ENCODE measurements at regions of chr1 and their contacts with region 1.

Region 1: DNA sequence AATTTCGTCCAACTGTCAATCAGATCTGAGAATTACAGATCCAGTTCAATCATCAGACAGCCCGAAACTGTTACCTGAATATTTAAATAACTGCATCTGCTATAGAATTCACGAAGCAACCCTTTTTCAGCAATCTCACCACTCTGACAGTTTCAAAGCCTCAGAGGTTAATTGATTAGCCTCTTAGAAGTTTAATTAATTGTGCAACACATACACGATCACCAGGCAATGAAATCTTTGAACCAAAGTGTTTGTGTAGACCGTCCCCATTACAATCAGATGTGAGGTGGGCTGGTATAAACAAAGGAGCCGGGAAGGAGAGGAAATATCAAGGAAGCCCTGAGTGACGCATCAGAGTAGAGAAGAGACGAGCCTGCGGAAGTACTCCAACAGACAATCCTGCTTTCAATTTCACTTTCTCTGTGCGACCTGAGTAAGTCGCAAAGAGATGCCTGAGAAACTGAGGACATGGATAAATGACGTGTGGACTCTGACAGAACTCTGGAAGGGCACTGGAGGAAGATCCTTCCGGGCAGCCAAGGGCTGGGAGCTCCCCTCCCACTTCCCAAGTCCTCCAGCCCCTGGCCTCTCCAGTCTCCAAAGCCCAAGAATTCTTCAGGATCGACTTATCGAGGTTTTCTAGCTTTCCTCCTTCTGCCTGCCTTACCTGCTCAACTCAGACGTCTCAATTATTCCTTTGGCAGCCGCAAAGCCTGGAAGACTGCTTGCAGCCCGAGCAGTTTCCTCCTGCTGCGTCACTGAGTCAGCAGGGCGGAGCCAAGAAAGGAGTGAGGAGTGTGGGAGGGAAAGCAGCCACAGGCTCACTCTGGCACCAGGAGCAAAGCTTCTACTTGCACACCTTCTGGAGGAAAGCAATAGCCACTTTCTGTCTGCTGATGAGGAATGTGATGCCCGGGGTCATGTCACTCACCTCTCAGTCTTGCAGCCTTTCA is at the start of gene RNASEL:
- DNase-seq: peak; percentile 94
- H3K4me3 ChIP-seq: peak within 1 kb of the TSS; percentile 71 to 73 (median 72)
- H3K27ac ChIP-seq: peak within 1 kb of the TSS; percentile 86 to 93 (median 90)
- H3K4me1 ChIP-seq: peaks cover 7 to 34% (median 28%) of the 10 kb centered on the region in 4 donors
- H3K27me3 ChIP-seq: no peaks in the 10 kb centered on the region
- CTCF ChIP-seq: no peak
- EP300 ChIP-seq: no peak
- POLR2A ChIP-seq: no peak
- total RNA-seq, gene RNASEL: 6.0 to 10.8 (median 9.0) TPM

Region 2: DNA sequence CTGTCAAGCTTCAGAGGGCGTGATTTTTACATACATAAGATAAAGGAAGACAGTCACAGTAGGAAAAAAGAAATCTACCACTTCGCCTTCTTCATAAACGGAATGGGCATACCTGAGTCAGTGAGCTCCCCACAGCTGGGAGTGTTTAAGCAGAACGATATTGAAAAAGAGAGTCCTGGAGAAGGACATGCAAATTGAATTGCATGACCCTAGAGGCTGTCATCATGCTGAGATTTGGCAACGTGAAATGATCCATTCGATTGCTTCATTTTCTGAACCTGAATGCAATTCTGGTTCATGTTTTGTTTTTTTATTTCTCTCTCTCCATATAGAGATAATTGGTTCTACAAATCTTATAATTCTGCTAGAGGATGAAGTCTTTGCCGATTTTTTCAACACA is 135.2 kb before region 1 on chr1:
- intact Hi-C with region 1: loop called (anchors 10 kb)
- DNase-seq: no peak
- H3K4me3 ChIP-seq: no peak overlapping the region
- H3K27ac ChIP-seq: no peak overlapping the region
- H3K4me1 ChIP-seq: no peaks in the 10 kb centered on the region
- H3K27me3 ChIP-seq: peaks cover 0 to 5% (median 0%) of the 10 kb centered on the region in 4 donors
- CTCF ChIP-seq: no peak
- EP300 ChIP-seq: no peak
- POLR2A ChIP-seq: no peak

Region 3: GRCh38 chr1:182527680-182528079 is 61.1 kb before region 1 on chr1:
- intact Hi-C with region 1: no loop called
- DNase-seq: no peak
- H3K4me3 ChIP-seq: no peak overlapping the region
- H3K27ac ChIP-seq: no peak overlapping the region
- H3K4me1 ChIP-seq: no peaks in the 10 kb centered on the region
- H3K27me3 ChIP-seq: no peaks in the 10 kb centered on the region
- CTCF ChIP-seq: no peak
- EP300 ChIP-seq: no peak
- POLR2A ChIP-seq: no peak

Measured in esophagus muscularis mucosa (tissue), 4 donors.